H1 (cell line): ENCODE measurements at regions of chr6 and their contacts with region 1.

Region 1: DNA sequence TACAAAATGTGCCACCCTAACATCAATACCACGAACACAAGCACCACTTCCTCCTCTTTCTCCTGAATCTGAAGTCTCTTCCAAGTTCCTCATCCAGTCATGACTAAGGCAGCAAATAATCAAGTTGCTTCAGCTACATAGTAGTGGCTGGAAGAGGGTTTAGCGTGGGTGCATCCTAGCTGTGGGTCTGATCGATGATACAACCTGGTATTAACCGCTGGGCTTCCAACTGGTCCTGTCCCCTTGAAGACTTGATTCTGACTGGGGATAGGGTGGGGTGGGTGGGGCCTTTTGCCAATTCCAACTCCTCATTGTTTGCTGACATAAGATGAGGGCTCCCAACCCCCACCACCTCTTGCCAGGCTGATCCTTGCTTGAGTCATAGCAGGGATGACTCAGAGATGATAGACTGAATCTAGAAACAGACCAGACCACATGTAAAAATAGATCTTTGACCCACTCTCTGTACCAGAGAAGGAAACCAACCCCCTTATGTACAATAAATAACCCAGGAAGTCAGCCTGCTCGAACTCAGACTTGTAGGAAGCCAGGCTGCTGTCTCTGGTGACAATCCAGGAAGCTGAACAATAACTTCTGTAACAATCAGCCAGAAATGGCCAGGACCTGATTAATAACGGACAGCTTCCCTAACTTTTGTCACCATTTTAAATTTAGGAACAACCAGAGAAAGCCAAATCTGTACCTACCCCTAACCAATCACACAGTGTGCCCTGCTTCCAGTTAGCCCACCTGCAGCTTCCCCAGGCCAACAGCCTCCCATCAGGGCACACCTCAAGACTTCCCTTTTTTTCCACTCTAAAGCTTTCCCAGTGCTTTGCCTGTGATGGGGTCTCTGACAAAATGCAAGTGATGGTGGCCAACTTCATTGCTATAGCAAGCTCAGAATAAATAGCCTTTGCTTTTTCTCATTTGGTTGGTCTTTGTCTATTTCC is 68.9 kb upstream of the FAM184A start:
- DNase-seq: peak in 1 of 2 experiments; percentile 41
- H3K4me3 ChIP-seq: no peak overlapping the region
- H3K27ac ChIP-seq: no peak overlapping the region
- H3K4me1 ChIP-seq: 0 out of 7 replicates have a peak, but pooled peaks cover 0 to 2% (median 0%) of the 10 kb centered on the region in 4 experiments
- H3K27me3 ChIP-seq: no peaks in the 10 kb centered on the region
- CTCF ChIP-seq: no peak
- EP300 ChIP-seq: no peak
- POLR2A ChIP-seq: no peak
- RAD21 ChIP-seq: no peak

Region 2: GRCh38 chr6:119158057-119158848 is 10.9 kb after region 1 on chr6:
- CTCF ChIA-PET with region 1: interaction called, 22 read pairs
- POLR2A ChIA-PET with region 1: no interaction called
- DNase-seq: no peak
- H3K4me3 ChIP-seq: no peak overlapping the region
- H3K27ac ChIP-seq: no peak overlapping the region
- H3K4me1 ChIP-seq: no peaks in the 10 kb centered on the region
- H3K27me3 ChIP-seq: no peaks in the 10 kb centered on the region
- CTCF ChIP-seq: no peak
- EP300 ChIP-seq: no peak
- POLR2A ChIP-seq: no peak
- RAD21 ChIP-seq: no peak

Region 3: GRCh38 chr6:119172824-119173223 is 25.4 kb after region 1 on chr6:
- CTCF ChIA-PET with region 1: interaction called, 11 read pairs
- POLR2A ChIA-PET with region 1: no interaction called
- DNase-seq: no peak
- H3K4me3 ChIP-seq: no peak overlapping the region
- H3K27ac ChIP-seq: no peak overlapping the region
- H3K4me1 ChIP-seq: no peaks in the 10 kb centered on the region
- H3K27me3 ChIP-seq: no peaks in the 10 kb centered on the region
- CTCF ChIP-seq: no peak
- EP300 ChIP-seq: no peak
- POLR2A ChIP-seq: no peak
- RAD21 ChIP-seq: no peak

Region 4: DNA sequence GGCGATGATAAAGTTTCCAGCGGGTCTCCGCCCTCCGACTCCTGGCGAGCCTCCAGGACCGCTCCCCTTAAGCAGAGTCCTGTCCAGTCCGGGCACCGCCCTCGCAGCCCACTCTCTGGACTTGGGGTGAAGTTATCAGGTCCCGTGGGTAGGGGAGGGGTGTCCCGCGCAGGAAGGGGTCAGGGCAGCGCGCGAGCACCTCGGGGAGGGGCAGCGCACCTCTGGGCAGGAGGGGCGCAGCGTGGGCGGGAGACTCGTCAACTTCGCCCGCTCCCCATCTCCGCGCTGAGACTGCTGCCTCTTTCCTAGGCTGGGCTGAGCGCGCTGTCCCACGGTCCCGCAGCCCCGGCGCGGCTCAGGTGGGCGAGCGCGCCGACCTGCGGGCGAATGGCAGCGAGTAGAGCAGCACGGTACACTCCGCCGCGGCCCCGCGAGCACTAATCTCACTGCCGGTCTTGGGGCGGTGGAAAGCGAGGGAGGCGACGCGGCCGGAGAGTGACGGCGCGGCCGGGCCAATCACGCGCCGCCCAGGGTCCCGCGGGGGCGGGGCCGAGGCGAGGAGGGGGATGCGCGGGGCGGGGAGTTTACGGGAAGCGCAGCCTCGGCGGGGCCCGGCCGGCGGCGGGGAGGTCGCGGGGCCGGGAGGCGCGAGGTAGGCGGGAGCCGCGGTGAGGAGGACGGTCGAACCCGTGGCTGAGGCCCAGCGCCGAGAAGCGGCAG is 202.1 kb after region 1 on chr6 and contains the start of gene MAN1A1:
- CTCF ChIA-PET with region 1: interaction called, 10 read pairs
- POLR2A ChIA-PET with region 1: no interaction called
- DNase-seq: peak; percentile 36 to 94
- H3K4me3 ChIP-seq: peak within 1 kb of the TSS; percentile 59 to 94 (median 74)
- H3K27ac ChIP-seq: no peak within 1 kb of the TSS
- H3K4me1 ChIP-seq: peaks cover 2 to 10% (median 5%) of the 10 kb centered on the region in 4 experiments; a peak in 4 of 7 replicates
- H3K27me3 ChIP-seq: peaks cover 0 to 18% (median 14%) of the 10 kb centered on the region in 4 experiments; a peak in 6 of 7 replicates
- CTCF ChIP-seq: no peak
- EP300 ChIP-seq: no peak
- POLR2A ChIP-seq: no peak; a peak in 1 of 3 replicates
- RAD21 ChIP-seq: no peak
- total RNA-seq, gene MAN1A1: 5.4 TPM in 2 replicates

Region 5: GRCh38 chr6:119978274-119978889 is 831.0 kb after region 1 on chr6:
- CTCF ChIA-PET with region 1: interaction called, 18 read pairs
- POLR2A ChIA-PET with region 1: no interaction called
- DNase-seq: no peak
- H3K4me3 ChIP-seq: no peak overlapping the region
- H3K27ac ChIP-seq: no peak overlapping the region
- H3K4me1 ChIP-seq: no peaks in the 10 kb centered on the region
- H3K27me3 ChIP-seq: no peaks in the 10 kb centered on the region
- CTCF ChIP-seq: peak in 2 of 3 experiments; percentile 39 to 48; a peak in 3 of 4 replicates
- EP300 ChIP-seq: no peak
- POLR2A ChIP-seq: no peak
- RAD21 ChIP-seq: peak; percentile 54 to 58